Naive thymus-derived CD8-positive, alpha-beta T cell (primary cell): ENCODE measurements at regions of chr13 and their contacts with region 1.

Region 1: GRCh38 chr13:49996951-49997895 is at the start of gene TRIM13:
- DNase-seq: peak; percentile 64 to 86 (median 76)
- ATAC-seq: peak; percentile 83 to 88
- H3K4me3 Mint-ChIP-seq: peak within 1 kb of the TSS; percentile 82 to 93 (median 85)
- H3K27ac Mint-ChIP-seq: peak within 1 kb of the TSS; percentile 83 to 94 (median 89)
- H3K4me1 Mint-ChIP-seq: peaks cover 8 to 55% (median 38%) of the 10 kb centered on the region in 4 donors
- H3K27me3 Mint-ChIP-seq: no peaks in the 10 kb centered on the region
- polyA plus RNA-seq, gene TRIM13: 7.3 to 8.5 (median 7.5) TPM

Region 2: GRCh38 chr13:49869519-49869918 is 127.7 kb before region 1 on chr13:
- POLR2A ChIA-PET with region 1: no interaction called
- DNase-seq: no peak
- ATAC-seq: no peak
- H3K4me3 Mint-ChIP-seq: no peak overlapping the region
- H3K27ac Mint-ChIP-seq: no peak overlapping the region
- H3K4me1 Mint-ChIP-seq: no peaks in the 10 kb centered on the region
- H3K27me3 Mint-ChIP-seq: peaks cover 0 to 4% (median 0%) of the 10 kb centered on the region in 5 donors

Region 3: DNA sequence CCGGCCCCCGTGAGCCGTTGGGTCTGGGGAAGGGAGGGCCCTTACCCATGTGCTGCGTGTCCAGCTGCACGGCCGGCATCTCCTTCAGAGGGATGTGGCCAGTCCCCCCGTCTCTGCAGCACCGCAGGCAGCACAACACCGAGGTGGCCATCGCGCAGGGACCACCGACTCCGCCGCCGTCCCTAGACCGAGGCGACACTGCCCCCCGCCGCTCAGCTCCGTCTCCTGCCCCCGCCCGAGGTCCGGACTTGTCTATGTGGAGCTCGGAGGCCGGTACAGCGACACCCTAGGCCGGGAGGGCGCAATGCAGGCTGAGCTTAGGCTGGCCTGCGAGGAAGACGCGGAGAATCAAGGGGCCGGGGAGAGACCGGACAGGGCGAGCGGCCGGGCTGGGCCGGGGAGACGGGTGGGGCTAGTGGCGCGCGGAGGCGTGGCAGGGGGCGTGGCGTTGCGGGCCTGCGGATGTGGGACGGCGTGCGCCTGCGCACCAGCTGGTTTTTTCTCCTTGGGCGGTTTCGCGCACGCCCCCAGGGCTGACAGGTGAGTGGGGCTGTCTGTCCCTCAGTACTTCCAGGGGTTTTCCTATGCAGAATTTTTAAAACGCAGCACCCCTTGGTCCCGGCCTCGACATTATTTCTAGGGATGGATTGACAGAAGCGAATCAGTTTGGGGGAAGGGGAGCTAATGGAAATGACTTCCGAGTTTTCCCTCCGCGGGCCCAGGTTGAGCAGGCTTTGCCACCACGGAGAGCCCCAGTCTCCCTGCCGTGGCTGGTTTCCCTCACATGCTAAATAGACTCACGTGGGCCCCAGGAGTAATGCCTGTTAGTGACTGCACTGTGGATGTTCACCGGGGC is 60.9 kb before region 1 on chr13 and contains the start of gene SPRYD7:
- POLR2A ChIA-PET with region 1: interaction called, 11 read pairs
- DNase-seq: peak; percentile 82 to 95 (median 91)
- ATAC-seq: peak; percentile 82 to 84
- H3K4me3 Mint-ChIP-seq: peak within 1 kb of the TSS; percentile 92 to 98 (median 95)
- H3K27ac Mint-ChIP-seq: peak within 1 kb of the TSS; percentile 72 to 97 (median 88)
- H3K4me1 Mint-ChIP-seq: peaks cover 9 to 25% (median 18%) of the 10 kb centered on the region in 4 donors
- H3K27me3 Mint-ChIP-seq: no peaks in the 10 kb centered on the region
- polyA plus RNA-seq, gene SPRYD7: 2.1 to 2.6 (median 2.3) TPM

Region 4: GRCh38 chr13:50081679-50082425 is 84.6 kb after region 1 on chr13:
- POLR2A ChIA-PET with region 1: interaction called, 38 read pairs
- DNase-seq: peak; percentile 89 to 99 (median 98)
- ATAC-seq: peak; percentile 74 to 76
- H3K4me3 Mint-ChIP-seq: peak overlapping the region; percentile 90 to 99 (median 96)
- H3K27ac Mint-ChIP-seq: peak overlapping the region; percentile 90 to 97 (median 94)
- H3K4me1 Mint-ChIP-seq: peaks cover 7 to 72% (median 33%) of the 10 kb centered on the region in 4 donors
- H3K27me3 Mint-ChIP-seq: peaks cover 2 to 25% (median 10%) of the 10 kb centered on the region in 5 donors

Region 5: GRCh38 chr13:50911937-50912795 is 914.9 kb after region 1 on chr13:
- POLR2A ChIA-PET with region 1: interaction called, 27 read pairs
- DNase-seq: peak; percentile 77 to 95 (median 88)
- ATAC-seq: peak; percentile 48 to 60
- H3K4me3 Mint-ChIP-seq: peak overlapping the region; percentile 80 to 97 (median 90)
- H3K27ac Mint-ChIP-seq: peak overlapping the region; percentile 91 to 99 (median 96)
- H3K4me1 Mint-ChIP-seq: peaks cover 29 to 69% (median 55%) of the 10 kb centered on the region in 4 donors
- H3K27me3 Mint-ChIP-seq: no peaks in the 10 kb centered on the region